ENCODE measurements at regions of chr2 and their contacts with region 1.

Region 1: DNA sequence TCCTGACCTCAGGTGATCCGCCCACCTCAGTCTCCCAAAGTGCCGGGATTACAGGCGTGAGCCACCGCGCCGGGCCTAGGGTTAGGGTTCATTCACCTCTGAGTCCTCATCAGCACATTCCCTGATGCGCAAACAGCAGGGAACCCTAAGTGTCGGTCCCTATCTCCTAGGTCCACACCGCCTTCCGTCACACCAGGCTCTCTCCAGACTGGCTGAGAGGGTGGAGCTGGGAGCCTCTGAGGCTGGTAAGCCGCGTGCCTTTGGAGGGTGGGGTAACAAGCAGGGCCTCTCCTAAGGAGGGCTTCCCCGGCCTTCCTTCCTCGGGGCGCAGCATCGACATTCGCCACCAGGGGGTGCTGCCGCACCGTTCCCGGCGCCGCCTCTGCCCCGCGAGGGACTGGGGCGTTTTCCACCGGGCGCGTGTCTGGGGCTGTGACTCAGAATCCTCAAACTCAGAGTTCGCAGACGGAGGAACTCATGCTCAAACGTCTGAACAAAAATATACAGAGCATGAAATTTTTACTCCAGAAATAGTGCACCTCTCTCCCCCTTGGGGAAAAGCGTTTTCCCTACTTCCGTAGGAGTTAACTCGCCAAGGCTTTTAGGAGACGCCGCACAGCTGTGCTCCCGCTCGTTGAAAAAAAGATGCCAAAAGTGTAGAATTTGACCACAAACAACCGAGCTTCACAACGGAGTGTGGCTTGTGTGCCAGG is 63.9 kb upstream of the ASAP2 start:
- DNase-seq: peak; percentile 85
- H3K4me3 Mint-ChIP-seq: no peak overlapping the region
- H3K27ac Mint-ChIP-seq: no peak overlapping the region
- H3K4me1 Mint-ChIP-seq: no peaks in the 10 kb centered on the region
- H3K27me3 Mint-ChIP-seq: peaks cover 18% of the 10 kb centered on the region

Region 2: GRCh38 chr2:8872821-8873432 is 269.8 kb before region 1 on chr2:
- CTCF ChIA-PET with region 1: interaction called, 4 read pairs
- intact Hi-C with region 1: loop called (anchors 1 kb)
- DNase-seq: no peak
- H3K4me3 Mint-ChIP-seq: no peak overlapping the region
- H3K27ac Mint-ChIP-seq: no peak overlapping the region
- H3K4me1 Mint-ChIP-seq: no peaks in the 10 kb centered on the region
- H3K27me3 Mint-ChIP-seq: peaks cover 4% of the 10 kb centered on the region

Region 3: DNA sequence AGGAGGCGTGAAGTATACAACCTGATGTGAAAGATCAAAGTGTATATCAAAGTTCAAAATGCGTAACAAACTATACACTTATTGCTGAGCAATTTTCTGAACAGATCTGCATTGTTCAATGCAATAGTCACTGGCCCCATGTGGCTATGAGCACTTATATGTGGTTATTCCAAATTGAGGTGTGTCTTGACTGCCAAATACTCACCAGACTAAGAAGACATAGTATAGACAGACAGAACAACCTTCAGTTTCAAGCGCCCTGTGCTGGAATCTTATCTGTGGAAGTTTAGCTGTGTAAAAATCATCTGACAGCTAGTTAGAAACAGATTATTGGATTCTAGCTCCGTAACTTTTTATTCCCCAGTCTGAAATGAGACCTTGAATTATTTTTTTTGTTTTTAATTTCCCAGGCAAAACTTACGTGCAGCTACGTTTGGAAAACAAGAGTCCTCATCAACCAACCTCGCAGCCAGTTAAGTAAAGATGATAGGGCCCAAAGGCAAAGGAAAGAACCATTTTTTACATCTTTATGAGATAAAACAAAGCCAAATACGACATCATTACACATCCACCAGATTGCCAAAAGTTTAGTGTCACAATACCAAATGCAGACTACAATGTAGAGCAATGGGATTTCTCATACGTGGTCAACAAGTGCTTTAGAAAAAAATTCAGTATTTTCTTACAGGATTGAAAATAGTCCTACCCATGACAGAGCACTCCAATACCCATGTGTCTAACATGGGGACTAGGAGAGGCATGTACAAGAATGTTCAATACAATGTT is 176.4 kb before region 1 on chr2:
- CTCF ChIA-PET with region 1: no interaction called
- intact Hi-C with region 1: no loop called
- DNase-seq: no peak
- H3K4me3 Mint-ChIP-seq: no peak overlapping the region
- H3K27ac Mint-ChIP-seq: no peak overlapping the region
- H3K4me1 Mint-ChIP-seq: no peaks in the 10 kb centered on the region
- H3K27me3 Mint-ChIP-seq: peaks cover 6% of the 10 kb centered on the region

Region 4: GRCh38 chr2:9057939-9058761 is 84.6 kb before region 1 on chr2:
- CTCF ChIA-PET with region 1: no interaction called
- intact Hi-C with region 1: no loop called
- DNase-seq: no peak
- H3K4me3 Mint-ChIP-seq: no peak overlapping the region
- H3K27ac Mint-ChIP-seq: no peak overlapping the region
- H3K4me1 Mint-ChIP-seq: peaks cover 4% of the 10 kb centered on the region
- H3K27me3 Mint-ChIP-seq: peaks cover 3% of the 10 kb centered on the region

Region 5: GRCh38 chr2:9370746-9371145 is 228.0 kb after region 1 on chr2:
- CTCF ChIA-PET with region 1: interaction called, 7 read pairs
- intact Hi-C with region 1: loop called (anchors 1 kb)
- DNase-seq: no peak
- H3K4me3 Mint-ChIP-seq: no peak overlapping the region
- H3K27ac Mint-ChIP-seq: no peak overlapping the region
- H3K4me1 Mint-ChIP-seq: no peaks in the 10 kb centered on the region
- H3K27me3 Mint-ChIP-seq: no peaks in the 10 kb centered on the region

Region 6: GRCh38 chr2:9799665-9800632 is 657.2 kb after region 1 on chr2:
- CTCF ChIA-PET with region 1: no interaction called
- intact Hi-C with region 1: loop called (anchors 2 kb)
- DNase-seq: peak; percentile 93
- H3K4me3 Mint-ChIP-seq: no peak overlapping the region
- H3K27ac Mint-ChIP-seq: no peak overlapping the region
- H3K4me1 Mint-ChIP-seq: peaks cover 11% of the 10 kb centered on the region
- H3K27me3 Mint-ChIP-seq: no peaks in the 10 kb centered on the region

Measured in activated naive CD4-positive, alpha-beta T cell treated with anti-CD3 and anti-CD28 coated beads for 36 hours (primary cell).